Adrenal gland (tissue), 19 donors: ENCODE measurements at regions of chr3 and their contacts with region 1.

Region 1: GRCh38 chr3:19065027-19065426 is 83.3 kb upstream of the KCNH8 start:
- DNase-seq: peak in 1 of 7 donors; percentile 23
- H3K4me3 ChIP-seq: no peak overlapping the region
- H3K27ac ChIP-seq: no peak overlapping the region
- H3K4me1 ChIP-seq: no peaks in the 10 kb centered on the region
- H3K27me3 ChIP-seq: no peaks in the 10 kb centered on the region
- CTCF ChIP-seq: peak in 5 of 6 experiments; percentile 24 to 60 (median 48)
- POLR2A ChIP-seq: no peak

Region 2: DNA sequence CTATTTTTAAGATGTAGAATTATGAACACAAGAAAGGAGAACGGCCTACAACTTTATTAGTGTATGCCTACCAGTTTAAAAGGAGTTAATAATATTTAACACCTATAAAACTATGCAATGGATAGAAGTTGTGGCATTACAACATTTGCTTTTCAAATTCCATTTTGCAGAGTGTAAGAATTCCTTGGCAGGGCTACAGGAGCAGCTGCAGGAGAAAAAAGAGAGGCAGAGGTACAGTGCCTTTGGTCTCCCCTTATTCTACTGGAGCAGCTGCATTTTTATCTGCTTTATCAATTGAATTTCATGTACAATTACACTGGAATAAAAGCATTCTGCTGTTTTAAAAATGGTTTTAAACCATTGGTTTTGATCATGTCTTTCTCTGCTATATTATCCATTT is 62.4 kb before region 1 on chr3:
- intact Hi-C with region 1: no loop called
- DNase-seq: no peak
- H3K4me3 ChIP-seq: no peak overlapping the region
- H3K27ac ChIP-seq: no peak overlapping the region
- H3K4me1 ChIP-seq: no peaks in the 10 kb centered on the region
- H3K27me3 ChIP-seq: no peaks in the 10 kb centered on the region
- CTCF ChIP-seq: no peak
- POLR2A ChIP-seq: no peak

Region 3: GRCh38 chr3:19190602-19191001 is 125.6 kb after region 1 on chr3:
- intact Hi-C with region 1: no loop called
- DNase-seq: no peak
- H3K4me3 ChIP-seq: no peak overlapping the region
- H3K27ac ChIP-seq: no peak overlapping the region
- H3K4me1 ChIP-seq: peaks cover 8% of the 10 kb centered on the region in 2 donors
- H3K27me3 ChIP-seq: no peaks in the 10 kb centered on the region
- CTCF ChIP-seq: no peak
- POLR2A ChIP-seq: no peak

Region 4: GRCh38 chr3:19250959-19251610 is 186.1 kb after region 1 on chr3:
- intact Hi-C with region 1: no loop called
- DNase-seq: peak in 3 of 7 donors; percentile 16 to 46 (median 33)
- H3K4me3 ChIP-seq: no peak overlapping the region
- H3K27ac ChIP-seq: no peak overlapping the region
- H3K4me1 ChIP-seq: no peaks in the 10 kb centered on the region
- H3K27me3 ChIP-seq: no peaks in the 10 kb centered on the region
- CTCF ChIP-seq: peak in 2 of 6 experiments; percentile 18 to 31
- POLR2A ChIP-seq: no peak

Region 5: GRCh38 chr3:19543212-19543841 is 478.3 kb after region 1 on chr3:
- intact Hi-C with region 1: loop called in 1 of 2 experiments (anchors 10 kb)
- DNase-seq: peak in 5 of 7 donors; percentile 8 to 56 (median 22)
- H3K4me3 ChIP-seq: no peak overlapping the region
- H3K27ac ChIP-seq: no peak overlapping the region
- H3K4me1 ChIP-seq: no peaks in the 10 kb centered on the region
- H3K27me3 ChIP-seq: no peaks in the 10 kb centered on the region
- CTCF ChIP-seq: peak in 5 of 6 experiments; percentile 25 to 61 (median 47)
- POLR2A ChIP-seq: no peak